T-cell (primary cell): ENCODE measurements at regions of chr7 and their contacts with region 1.

Region 1: GRCh38 chr7:12620371-12620770 is 49.9 kb downstream of the SCIN start:
- DNase-seq: no peak
- ATAC-seq: no peak
- H3K4me3 ChIP-seq: no peak overlapping the region
- H3K4me3 Mint-ChIP-seq: no peak overlapping the region
- H3K27ac ChIP-seq: no peak overlapping the region
- H3K27ac Mint-ChIP-seq: no peak overlapping the region
- H3K4me1 ChIP-seq: no peaks in the 10 kb centered on the region
- H3K4me1 Mint-ChIP-seq: no peaks in the 10 kb centered on the region
- H3K27me3 ChIP-seq: no peaks in the 10 kb centered on the region
- H3K27me3 Mint-ChIP-seq: peaks cover 3% of the 10 kb centered on the region in 2 donors

Region 2: GRCh38 chr7:12715372-12716133 is 95.2 kb after region 1 on chr7:
- CTCF ChIA-PET with region 1: no interaction called
- POLR2A ChIA-PET with region 1: interaction called in 1 of 2 experiments, 14 read pairs
- DNase-seq: peak in 11 of 35 experiments; percentile 1 to 26 (median 5)
- ATAC-seq: peak; percentile 50 to 83 (median 78)
- H3K4me3 ChIP-seq: no peak overlapping the region
- H3K4me3 Mint-ChIP-seq: peak overlapping the region in 1 of 3 donors; percentile 25
- H3K27ac ChIP-seq: no peak overlapping the region
- H3K27ac Mint-ChIP-seq: peak overlapping the region; percentile 37 to 54
- H3K4me1 ChIP-seq: peaks cover 8 to 13% of the 10 kb centered on the region in 2 experiments
- H3K4me1 Mint-ChIP-seq: peaks cover 9 to 36% (median 21%) of the 10 kb centered on the region in 3 donors
- H3K27me3 ChIP-seq: no peaks in the 10 kb centered on the region
- H3K27me3 Mint-ChIP-seq: no peaks in the 10 kb centered on the region